CD8-positive, alpha-beta T cell (primary cell): ENCODE measurements at regions of chr1 and their contacts with region 1.

Region 1: DNA sequence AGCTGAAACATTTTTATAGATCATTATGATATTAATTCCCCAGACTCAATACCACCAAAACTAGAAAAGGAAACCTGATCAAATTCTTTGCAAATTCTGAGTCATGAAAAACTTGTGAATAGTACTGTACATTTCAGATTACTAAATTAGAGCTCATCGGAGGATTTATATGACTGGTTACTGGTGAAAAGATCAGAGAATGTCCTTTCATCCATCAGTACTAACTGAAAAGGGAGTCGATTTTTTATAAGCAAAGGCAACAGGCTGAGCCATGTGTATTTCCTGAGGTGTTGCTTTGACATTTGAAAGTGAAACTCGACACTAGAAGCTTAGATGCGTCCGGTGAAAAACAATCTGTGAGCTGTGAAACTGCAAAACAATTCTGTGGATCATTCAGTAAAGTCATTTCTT is 155.7 kb downstream of the TNFSF18 start:
- DNase-seq: peak in 6 of 9 experiments; percentile 9 to 70 (median 25)
- ATAC-seq: peak; percentile 83
- H3K4me3 ChIP-seq: peak overlapping the region; percentile 12 to 14
- H3K4me3 Mint-ChIP-seq: peak overlapping the region; percentile 78
- H3K27ac ChIP-seq: peak overlapping the region; percentile 17 to 64
- H3K27ac Mint-ChIP-seq: peak overlapping the region; percentile 92
- H3K4me1 ChIP-seq: peaks cover 24% of the 10 kb centered on the region
- H3K4me1 Mint-ChIP-seq: peaks cover 40% of the 10 kb centered on the region
- H3K27me3 ChIP-seq: no peaks in the 10 kb centered on the region
- H3K27me3 Mint-ChIP-seq: no peaks in the 10 kb centered on the region
- CTCF ChIP-seq: no peak

Region 2: GRCh38 chr1:172863031-172863430 is 32.0 kb before region 1 on chr1:
- CTCF ChIA-PET with region 1: no interaction called
- POLR2A ChIA-PET with region 1: interaction called, 5 read pairs
- intact Hi-C with region 1: loop called in 1 of 2 experiments (anchors 5 kb)
- DNase-seq: no peak
- ATAC-seq: no peak
- H3K4me3 ChIP-seq: no peak overlapping the region
- H3K4me3 Mint-ChIP-seq: no peak overlapping the region
- H3K27ac ChIP-seq: no peak overlapping the region
- H3K27ac Mint-ChIP-seq: no peak overlapping the region
- H3K4me1 ChIP-seq: no peaks in the 10 kb centered on the region
- H3K4me1 Mint-ChIP-seq: peaks cover 6% of the 10 kb centered on the region
- H3K27me3 ChIP-seq: no peaks in the 10 kb centered on the region
- H3K27me3 Mint-ChIP-seq: no peaks in the 10 kb centered on the region
- CTCF ChIP-seq: no peak

Region 3: GRCh38 chr1:172906778-172907592 is 11.9 kb after region 1 on chr1:
- CTCF ChIA-PET with region 1: interaction called, 3 read pairs
- POLR2A ChIA-PET with region 1: interaction called, 7 read pairs
- intact Hi-C with region 1: loop called in 1 of 2 experiments (anchors 1 kb)
- DNase-seq: peak in 3 of 9 experiments; percentile 27 to 52 (median 30)
- ATAC-seq: peak; percentile 48
- H3K4me3 ChIP-seq: no peak overlapping the region
- H3K4me3 Mint-ChIP-seq: no peak overlapping the region
- H3K27ac ChIP-seq: peak overlapping the region in 1 of 2 experiments; percentile 11
- H3K27ac Mint-ChIP-seq: peak overlapping the region; percentile 58
- H3K4me1 ChIP-seq: peaks cover 17% of the 10 kb centered on the region
- H3K4me1 Mint-ChIP-seq: peaks cover 21% of the 10 kb centered on the region
- H3K27me3 ChIP-seq: no peaks in the 10 kb centered on the region
- H3K27me3 Mint-ChIP-seq: no peaks in the 10 kb centered on the region
- CTCF ChIP-seq: no peak

Region 4: GRCh38 chr1:172935062-172935592 is 40.1 kb after region 1 on chr1:
- CTCF ChIA-PET with region 1: no interaction called
- POLR2A ChIA-PET with region 1: no interaction called
- intact Hi-C with region 1: no loop called
- DNase-seq: no peak
- ATAC-seq: no peak
- H3K4me3 ChIP-seq: no peak overlapping the region
- H3K4me3 Mint-ChIP-seq: no peak overlapping the region
- H3K27ac ChIP-seq: no peak overlapping the region
- H3K27ac Mint-ChIP-seq: no peak overlapping the region
- H3K4me1 ChIP-seq: no peaks in the 10 kb centered on the region
- H3K4me1 Mint-ChIP-seq: peaks cover 7% of the 10 kb centered on the region
- H3K27me3 ChIP-seq: no peaks in the 10 kb centered on the region
- H3K27me3 Mint-ChIP-seq: no peaks in the 10 kb centered on the region
- CTCF ChIP-seq: no peak

Region 5: GRCh38 chr1:172948457-172948856 is 53.4 kb after region 1 on chr1:
- CTCF ChIA-PET with region 1: no interaction called
- POLR2A ChIA-PET with region 1: no interaction called
- intact Hi-C with region 1: no loop called
- DNase-seq: peak in 3 of 9 experiments; percentile 2 to 17 (median 9)
- ATAC-seq: no peak
- H3K4me3 ChIP-seq: no peak overlapping the region
- H3K4me3 Mint-ChIP-seq: no peak overlapping the region
- H3K27ac ChIP-seq: no peak overlapping the region
- H3K27ac Mint-ChIP-seq: no peak overlapping the region
- H3K4me1 ChIP-seq: peaks cover 6% of the 10 kb centered on the region
- H3K4me1 Mint-ChIP-seq: peaks cover 16% of the 10 kb centered on the region
- H3K27me3 ChIP-seq: no peaks in the 10 kb centered on the region
- H3K27me3 Mint-ChIP-seq: no peaks in the 10 kb centered on the region
- CTCF ChIP-seq: no peak